ENCODE measurements at regions of chr12 and their contacts with region 1.

Region 1: GRCh38 chr12:15563663-15564062 is 225.5 kb downstream of the EPS8 start:
- DNase-seq: peak in 3 of 9 experiments; percentile 11 to 58 (median 36)
- ATAC-seq: peak; percentile 93
- H3K4me3 ChIP-seq: peak overlapping the region in 1 of 2 experiments; percentile 38
- H3K4me3 Mint-ChIP-seq: peak overlapping the region; percentile 86
- H3K27ac ChIP-seq: peak overlapping the region; percentile 20 to 50
- H3K27ac Mint-ChIP-seq: peak overlapping the region; percentile 95
- H3K4me1 ChIP-seq: peaks cover 30% of the 10 kb centered on the region
- H3K4me1 Mint-ChIP-seq: peaks cover 36% of the 10 kb centered on the region
- H3K27me3 ChIP-seq: no peaks in the 10 kb centered on the region
- H3K27me3 Mint-ChIP-seq: no peaks in the 10 kb centered on the region
- CTCF ChIP-seq: no peak

Region 2: GRCh38 chr12:14970473-14970872 is 593.2 kb before region 1 on chr12:
- CTCF ChIA-PET with region 1: no interaction called
- POLR2A ChIA-PET with region 1: no interaction called
- intact Hi-C with region 1: loop called in 1 of 2 experiments (anchors 10 kb)
- DNase-seq: no peak
- ATAC-seq: no peak
- H3K4me3 ChIP-seq: no peak overlapping the region
- H3K4me3 Mint-ChIP-seq: no peak overlapping the region
- H3K27ac ChIP-seq: no peak overlapping the region
- H3K27ac Mint-ChIP-seq: no peak overlapping the region
- H3K4me1 ChIP-seq: peaks cover 12% of the 10 kb centered on the region
- H3K4me1 Mint-ChIP-seq: peaks cover 59% of the 10 kb centered on the region
- H3K27me3 ChIP-seq: no peaks in the 10 kb centered on the region
- H3K27me3 Mint-ChIP-seq: no peaks in the 10 kb centered on the region
- CTCF ChIP-seq: no peak

Region 3: DNA sequence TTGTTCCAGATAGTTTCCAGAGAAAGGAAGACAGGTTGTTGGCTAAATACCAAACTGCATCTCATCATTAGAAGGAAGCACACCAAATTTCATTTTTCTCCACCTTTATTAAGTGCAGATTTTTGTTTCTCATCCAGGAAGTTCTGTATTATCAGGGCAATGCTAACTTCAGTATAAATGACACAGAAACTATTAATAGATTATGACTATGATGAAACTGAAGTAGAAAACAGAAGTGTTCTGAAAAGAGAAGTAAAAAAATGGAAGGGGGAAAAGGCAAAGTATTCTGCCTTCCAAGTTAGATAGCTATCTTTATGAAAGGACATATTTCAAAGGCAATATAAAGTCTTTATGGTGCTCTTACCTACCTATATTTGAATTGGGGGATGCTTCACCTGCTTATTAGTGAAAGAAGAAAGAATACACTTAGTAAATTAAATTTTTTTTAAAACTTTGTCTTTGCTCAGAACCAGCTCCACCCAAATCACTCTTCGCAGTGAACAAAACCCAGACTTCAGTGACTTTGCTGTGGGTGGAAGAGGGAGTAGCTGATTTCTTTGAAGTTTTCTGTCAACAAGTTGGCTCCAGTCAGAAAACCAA is 17.5 kb before region 1 on chr12:
- CTCF ChIA-PET with region 1: interaction called, 5 read pairs
- POLR2A ChIA-PET with region 1: interaction called, 7 read pairs
- intact Hi-C with region 1: loop called (anchors 1 to 2 kb)
- DNase-seq: peak in 5 of 9 experiments; percentile 20 to 77 (median 56)
- ATAC-seq: peak; percentile 92
- H3K4me3 ChIP-seq: no peak overlapping the region
- H3K4me3 Mint-ChIP-seq: peak overlapping the region; percentile 62
- H3K27ac ChIP-seq: peak overlapping the region; percentile 57 to 61
- H3K27ac Mint-ChIP-seq: peak overlapping the region; percentile 97
- H3K4me1 ChIP-seq: peaks cover 39% of the 10 kb centered on the region
- H3K4me1 Mint-ChIP-seq: peaks cover 40% of the 10 kb centered on the region
- H3K27me3 ChIP-seq: no peaks in the 10 kb centered on the region
- H3K27me3 Mint-ChIP-seq: no peaks in the 10 kb centered on the region
- CTCF ChIP-seq: no peak

Region 4: DNA sequence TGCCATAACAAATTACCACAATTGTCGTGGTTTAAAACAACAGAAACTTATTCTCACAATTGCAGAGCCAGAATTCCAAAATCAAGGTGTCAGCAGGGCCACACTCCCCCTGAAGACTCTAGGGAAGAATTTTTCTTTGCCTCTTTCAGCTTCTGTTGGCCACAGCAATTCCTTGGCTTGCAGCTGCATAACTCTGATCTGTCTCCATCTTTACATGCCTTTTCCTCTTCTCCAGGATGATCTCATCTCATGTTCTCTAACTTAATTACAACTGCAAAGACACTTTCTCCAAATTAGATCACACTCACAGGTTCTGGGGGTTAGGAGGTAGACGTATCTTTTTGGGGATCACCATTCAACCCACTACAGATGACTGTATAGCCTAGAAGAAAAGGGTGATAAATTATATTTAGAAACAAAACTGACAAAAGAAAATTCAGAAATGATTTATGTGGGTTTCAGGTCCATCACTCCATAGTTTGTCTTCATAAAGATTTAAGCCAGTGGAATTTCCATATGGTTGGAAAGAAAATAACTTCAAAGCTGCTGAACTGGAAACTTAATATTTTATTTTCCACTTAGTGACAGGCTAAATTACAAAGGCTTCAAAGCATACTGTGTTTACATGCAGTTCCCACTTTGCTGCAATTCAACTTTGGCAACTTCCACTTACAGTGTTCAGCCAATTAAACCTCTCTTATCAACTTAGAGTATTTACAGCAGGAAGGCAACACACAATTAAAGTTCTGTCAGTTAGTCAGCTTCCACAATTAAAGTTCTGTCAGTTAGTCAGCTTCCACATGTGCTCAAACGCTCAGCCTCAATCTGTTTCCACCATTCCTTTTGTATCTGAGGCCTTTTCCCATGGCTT is 12.2 kb after region 1 on chr12:
- CTCF ChIA-PET with region 1: no interaction called
- POLR2A ChIA-PET with region 1: interaction called, 3 read pairs
- intact Hi-C with region 1: loop called in 1 of 2 experiments (anchors 1 kb)
- DNase-seq: no peak
- ATAC-seq: no peak
- H3K4me3 ChIP-seq: no peak overlapping the region
- H3K4me3 Mint-ChIP-seq: no peak overlapping the region
- H3K27ac ChIP-seq: no peak overlapping the region
- H3K27ac Mint-ChIP-seq: no peak overlapping the region
- H3K4me1 ChIP-seq: peaks cover 6% of the 10 kb centered on the region
- H3K4me1 Mint-ChIP-seq: peaks cover 14% of the 10 kb centered on the region
- H3K27me3 ChIP-seq: no peaks in the 10 kb centered on the region
- H3K27me3 Mint-ChIP-seq: no peaks in the 10 kb centered on the region
- CTCF ChIP-seq: no peak

Measured in CD8-positive, alpha-beta T cell (primary cell).